OCI-LY7 (cell line): ENCODE measurements at regions of chr13 and their contacts with region 1.

Region 1: GRCh38 chr13:51452361-51453206 is at the start of gene INTS6:
- DNase-seq: peak; percentile 100
- H3K4me3 ChIP-seq: peak within 1 kb of the TSS; percentile 85
- H3K27ac ChIP-seq: peak within 1 kb of the TSS; percentile 84
- H3K4me1 ChIP-seq: peaks cover 27% of the 10 kb centered on the region
- CTCF ChIP-seq: no peak
- total RNA-seq, gene INTS6: 37.0 and 45.6 TPM in 2 replicates

Region 2: DNA sequence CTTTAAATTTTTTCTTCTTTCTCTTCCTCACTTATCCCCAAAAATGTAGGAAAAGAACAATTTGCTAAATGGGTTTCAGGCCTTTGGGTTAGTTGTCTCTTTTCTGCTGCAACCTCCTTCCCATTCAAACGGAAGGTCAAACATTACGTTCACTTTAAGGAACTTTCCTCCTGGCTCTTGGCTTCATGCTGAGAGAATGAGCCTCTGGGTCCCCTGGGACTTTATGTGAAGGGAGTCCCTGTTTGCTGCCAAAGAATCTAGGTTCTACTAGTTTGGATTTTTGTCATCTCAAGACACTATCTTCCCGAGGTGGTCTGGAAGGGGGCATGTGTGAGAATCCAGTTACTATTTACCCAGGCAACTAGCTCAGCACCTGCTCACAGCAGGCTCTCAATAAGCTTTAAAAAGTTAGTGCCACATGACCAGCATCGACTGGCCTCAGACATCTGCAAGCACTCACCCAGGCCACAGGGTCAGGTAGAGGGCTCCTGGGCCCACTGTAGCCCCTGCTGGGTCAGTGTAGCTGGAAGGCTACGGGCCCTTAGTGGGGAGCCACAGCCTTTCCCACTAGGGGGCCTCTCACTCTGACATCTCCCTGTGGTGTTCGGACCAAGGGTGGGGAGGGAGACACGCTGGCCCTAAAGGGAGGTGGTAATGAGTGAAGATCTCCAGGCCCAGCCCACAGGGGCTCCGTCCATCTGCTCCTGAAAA is 189.9 kb before region 1 on chr13:
- CTCF ChIA-PET with region 1: no interaction called
- POLR2A ChIA-PET with region 1: no interaction called
- intact Hi-C with region 1: no loop called
- DNase-seq: peak; percentile 4
- H3K4me3 ChIP-seq: no peak overlapping the region
- H3K27ac ChIP-seq: no peak overlapping the region
- H3K4me1 ChIP-seq: no peaks in the 10 kb centered on the region
- CTCF ChIP-seq: peak; percentile 58

Region 3: GRCh38 chr13:51425410-51426042 is 27.1 kb before region 1 on chr13:
- CTCF ChIA-PET with region 1: interaction called, 5 read pairs
- POLR2A ChIA-PET with region 1: interaction called, 24 read pairs
- intact Hi-C with region 1: no loop called
- DNase-seq: no peak
- H3K4me3 ChIP-seq: no peak overlapping the region
- H3K27ac ChIP-seq: no peak overlapping the region
- H3K4me1 ChIP-seq: peaks cover 37% of the 10 kb centered on the region
- CTCF ChIP-seq: no peak

Region 4: GRCh38 chr13:51549050-51549449 is 96.5 kb after region 1 on chr13:
- CTCF ChIA-PET with region 1: no interaction called
- POLR2A ChIA-PET with region 1: no interaction called
- intact Hi-C with region 1: no loop called
- DNase-seq: no peak
- H3K4me3 ChIP-seq: no peak overlapping the region
- H3K27ac ChIP-seq: no peak overlapping the region
- H3K4me1 ChIP-seq: no peaks in the 10 kb centered on the region
- CTCF ChIP-seq: no peak

Region 5: GRCh38 chr13:51583875-51584730 is 131.5 kb after region 1 on chr13 and contains the start of gene WDFY2:
- CTCF ChIA-PET with region 1: interaction called, 4 read pairs
- POLR2A ChIA-PET with region 1: interaction called, 16 read pairs
- intact Hi-C with region 1: loop called (anchors 1 kb)
- DNase-seq: peak; percentile 99
- H3K4me3 ChIP-seq: peak within 1 kb of the TSS; percentile 77
- H3K27ac ChIP-seq: peak within 1 kb of the TSS; percentile 66
- H3K4me1 ChIP-seq: peaks cover 16% of the 10 kb centered on the region
- CTCF ChIP-seq: peak; percentile 43; the same call in 1 of the 2 replicates
- total RNA-seq, gene WDFY2: 6.4 and 8.2 TPM in 2 replicates

Region 6: DNA sequence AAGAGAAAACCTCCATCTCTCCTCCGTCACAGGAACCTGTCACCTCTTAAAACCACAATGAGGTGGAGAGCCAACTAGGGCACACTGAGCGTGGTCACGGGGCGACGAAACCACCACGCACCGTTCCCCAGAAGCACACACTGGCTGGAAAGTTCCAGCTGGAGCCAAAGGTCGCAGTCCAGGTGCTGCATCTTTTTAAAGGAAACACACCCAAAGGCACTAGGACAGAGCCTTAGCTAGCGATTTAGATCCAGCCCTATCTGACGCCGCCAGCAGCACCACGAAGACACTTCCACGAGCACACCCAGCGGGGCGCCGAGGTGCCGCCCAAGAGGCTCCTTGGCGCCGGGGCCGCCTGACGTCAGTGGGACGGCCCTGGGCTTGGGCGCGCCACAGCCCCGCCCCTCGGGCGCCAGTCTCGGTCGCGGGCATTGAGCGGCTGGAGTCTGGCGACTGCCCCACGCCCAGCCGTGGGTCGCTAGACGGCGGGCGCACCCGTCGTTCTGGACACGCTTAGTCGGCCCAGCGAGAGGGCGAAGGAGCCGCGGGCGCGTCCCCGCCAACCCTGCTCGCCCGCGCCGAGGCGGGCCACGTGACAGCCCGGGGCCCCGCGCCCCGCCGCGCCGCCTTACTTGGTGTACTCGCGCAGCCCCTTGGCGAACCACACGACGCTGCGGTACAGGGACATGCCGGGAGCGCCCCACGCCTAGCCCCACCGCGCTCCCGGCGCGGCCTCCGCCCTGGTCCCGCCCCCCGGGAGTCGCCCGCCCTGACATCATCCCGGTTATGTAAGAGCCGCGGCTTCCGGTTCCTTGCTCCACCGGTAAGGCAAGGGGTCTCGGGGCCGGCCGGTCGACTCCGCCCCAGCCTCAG is 351.1 kb after region 1 on chr13 and contains the start of gene DHRS12:
- CTCF ChIA-PET with region 1: no interaction called
- POLR2A ChIA-PET with region 1: interaction called, 17 read pairs
- intact Hi-C with region 1: loop called (anchors 2 kb)
- DNase-seq: peak; percentile 92
- H3K4me3 ChIP-seq: peak within 1 kb of the TSS; percentile 84
- H3K27ac ChIP-seq: peak within 1 kb of the TSS; percentile 67
- H3K4me1 ChIP-seq: peaks cover 75% of the 10 kb centered on the region
- CTCF ChIP-seq: peak; percentile 41; the same call in 1 of the 2 replicates
- total RNA-seq, gene DHRS12: 3.4 and 3.5 TPM in 2 replicates

Region 7: GRCh38 chr13:51825165-51825592 is 372.6 kb after region 1 on chr13:
- CTCF ChIA-PET with region 1: no interaction called
- POLR2A ChIA-PET with region 1: interaction called, 11 read pairs
- intact Hi-C with region 1: no loop called
- DNase-seq: peak; percentile 72
- H3K4me3 ChIP-seq: peak overlapping the region; percentile 25
- H3K27ac ChIP-seq: peak overlapping the region; percentile 95
- H3K4me1 ChIP-seq: peaks cover 100% of the 10 kb centered on the region
- CTCF ChIP-seq: no peak